Activated naive CD4-positive, alpha-beta T cell treated with anti-CD3 and anti-CD28 coated beads for 36 hours (primary cell): ENCODE measurements at regions of chr1 and their contacts with region 1.

Region 1: GRCh38 chr1:40224040-40224439 is 23.7 kb upstream of the TMCO2 start:
- DNase-seq: peak; percentile 42
- H3K4me3 Mint-ChIP-seq: no peak overlapping the region
- H3K27ac Mint-ChIP-seq: no peak overlapping the region
- H3K4me1 Mint-ChIP-seq: peaks cover 15% of the 10 kb centered on the region
- H3K27me3 Mint-ChIP-seq: no peaks in the 10 kb centered on the region

Region 2: GRCh38 chr1:40078512-40079333 is 145.3 kb before region 1 on chr1:
- CTCF ChIA-PET with region 1: no interaction called
- intact Hi-C with region 1: no loop called
- DNase-seq: peak; percentile 75
- H3K4me3 Mint-ChIP-seq: no peak overlapping the region
- H3K27ac Mint-ChIP-seq: no peak overlapping the region
- H3K4me1 Mint-ChIP-seq: peaks cover 7% of the 10 kb centered on the region
- H3K27me3 Mint-ChIP-seq: no peaks in the 10 kb centered on the region

Region 3: DNA sequence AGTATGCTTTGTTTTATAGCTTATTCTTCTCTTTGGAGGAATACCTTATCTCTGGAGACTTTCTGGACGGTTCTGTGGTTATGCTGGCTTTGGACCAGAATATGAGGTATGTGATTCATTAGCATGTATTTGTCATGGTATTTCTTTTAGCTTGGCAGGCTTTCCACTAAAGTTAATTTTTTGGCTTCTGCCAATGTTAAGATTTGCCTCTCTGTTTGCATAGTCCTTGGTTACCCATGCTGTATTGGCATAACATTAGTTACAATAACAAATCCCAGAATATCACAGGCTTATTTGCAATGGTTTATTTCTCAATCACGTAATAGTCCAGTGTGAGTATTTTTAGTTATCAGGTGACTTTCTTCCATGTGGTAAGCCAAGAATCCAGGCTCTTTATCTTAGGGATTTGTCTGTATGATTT is 43.7 kb after region 1 on chr1:
- CTCF ChIA-PET with region 1: no interaction called
- intact Hi-C with region 1: loop called (anchors 1 kb)
- DNase-seq: no peak
- H3K4me3 Mint-ChIP-seq: no peak overlapping the region
- H3K27ac Mint-ChIP-seq: no peak overlapping the region
- H3K4me1 Mint-ChIP-seq: peaks cover 53% of the 10 kb centered on the region
- H3K27me3 Mint-ChIP-seq: no peaks in the 10 kb centered on the region